Gastrocnemius medialis (tissue), 4 donors: ENCODE measurements at regions of chr12 and their contacts with region 1.

Region 1: GRCh38 chr12:67355578-67356379 is 86.6 kb downstream of the CAND1 start:
- DNase-seq: peak in 1 of 2 donors; percentile 14
- ATAC-seq: peak; percentile 74 to 79
- H3K4me3 ChIP-seq: peak overlapping the region in 2 of 4 donors; percentile 1 to 4
- H3K27ac ChIP-seq: peak overlapping the region; percentile 69 to 81 (median 76)
- H3K4me1 ChIP-seq: peaks cover 38 to 42% of the 10 kb centered on the region in 2 donors
- H3K27me3 ChIP-seq: no peaks in the 10 kb centered on the region
- CTCF ChIP-seq: peak in 4 of 5 experiments; percentile 42 to 59 (median 56)
- POLR2A ChIP-seq: no peak

Region 2: DNA sequence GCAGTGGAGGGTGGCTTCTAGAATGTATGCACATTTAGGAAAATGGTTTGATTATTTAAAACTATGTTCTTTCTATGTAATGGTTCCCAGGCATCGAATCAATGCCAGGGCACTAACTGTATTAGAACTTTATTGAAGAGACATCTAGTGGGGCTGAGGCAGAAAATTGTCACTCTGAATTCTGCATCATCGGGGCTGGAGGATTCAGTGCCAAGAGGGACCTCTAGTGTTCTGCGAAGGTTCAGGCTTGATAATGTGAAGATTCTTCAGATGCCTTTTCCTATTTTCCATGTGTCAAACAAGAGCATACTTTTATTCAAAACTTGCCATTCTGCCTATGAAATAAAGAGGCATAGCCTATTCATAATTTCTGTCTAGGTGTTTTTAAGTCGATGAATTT is 59.7 kb after region 1 on chr12:
- in situ Hi-C with region 1: no loop called
- intact Hi-C with region 1: loop called (anchors 1 kb)
- DNase-seq: no peak
- ATAC-seq: peak in 1 of 2 donors; percentile 37
- H3K4me3 ChIP-seq: no peak overlapping the region
- H3K27ac ChIP-seq: no peak overlapping the region
- H3K4me1 ChIP-seq: peaks cover 21 to 27% of the 10 kb centered on the region in 2 donors
- H3K27me3 ChIP-seq: no peaks in the 10 kb centered on the region
- CTCF ChIP-seq: peak in 2 of 5 experiments; percentile 29 to 40
- POLR2A ChIP-seq: no peak

Region 3: GRCh38 chr12:67441736-67442346 is 86.1 kb after region 1 on chr12:
- in situ Hi-C with region 1: loop called in 3 of 4 experiments (anchors 5 kb)
- intact Hi-C with region 1: loop called (anchors 1 kb)
- DNase-seq: peak; percentile 78 to 88
- ATAC-seq: peak; percentile 95 to 99
- H3K4me3 ChIP-seq: peak overlapping the region; percentile 45 to 55 (median 50)
- H3K27ac ChIP-seq: peak overlapping the region; percentile 70 to 86 (median 76)
- H3K4me1 ChIP-seq: peaks cover 13 to 18% of the 10 kb centered on the region in 2 donors
- H3K27me3 ChIP-seq: no peaks in the 10 kb centered on the region
- CTCF ChIP-seq: peak; percentile 69 to 86 (median 75)
- POLR2A ChIP-seq: no peak

Region 4: GRCh38 chr12:67661311-67662021 is 305.7 kb after region 1 on chr12:
- in situ Hi-C with region 1: loop called in 1 of 4 experiments (anchors 10 kb)
- intact Hi-C with region 1: loop called (anchors 2 kb)
- DNase-seq: peak in 1 of 2 donors; percentile 30
- ATAC-seq: peak; percentile 77 to 83
- H3K4me3 ChIP-seq: no peak overlapping the region
- H3K27ac ChIP-seq: peak overlapping the region; percentile 80 to 98 (median 81)
- H3K4me1 ChIP-seq: peaks cover 84 to 97% of the 10 kb centered on the region in 2 donors
- H3K27me3 ChIP-seq: no peaks in the 10 kb centered on the region
- CTCF ChIP-seq: no peak
- POLR2A ChIP-seq: no peak

Region 5: DNA sequence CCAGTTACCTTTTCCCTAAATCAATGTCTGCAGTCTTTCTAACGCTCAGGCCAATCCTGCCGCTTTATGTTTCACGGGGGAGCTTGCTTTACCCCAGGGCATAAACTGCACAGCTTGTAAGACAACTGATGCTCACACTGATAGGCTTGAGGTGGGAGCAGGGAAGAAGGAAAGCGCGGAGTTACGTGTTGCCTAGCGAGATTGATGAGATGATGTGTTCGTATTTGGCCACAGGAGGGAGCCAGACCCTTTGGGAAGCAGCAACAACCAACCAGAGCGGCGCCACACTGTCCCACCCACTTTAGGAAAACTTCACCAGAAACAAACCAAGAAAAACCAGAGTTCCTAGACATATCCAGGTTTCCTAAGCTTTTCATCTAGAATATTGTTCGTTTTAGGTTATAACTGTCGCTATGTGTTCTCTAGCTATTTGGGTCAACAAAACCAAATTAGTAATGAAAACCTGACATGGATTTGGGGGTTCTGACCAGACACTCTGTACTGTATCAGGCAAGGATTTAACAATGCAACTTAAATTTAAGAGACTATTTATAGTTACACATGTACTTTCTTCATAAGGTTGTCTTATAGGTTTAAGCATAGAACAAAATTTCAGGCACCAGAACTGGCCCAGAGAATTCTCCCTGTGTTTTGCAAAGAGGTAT is 867.4 kb after region 1 on chr12:
- in situ Hi-C with region 1: no loop called
- intact Hi-C with region 1: loop called (anchors 10 kb)
- DNase-seq: peak; percentile 65 to 67
- ATAC-seq: peak; percentile 96 to 99
- H3K4me3 ChIP-seq: peak overlapping the region in 3 of 4 donors; percentile 4 to 17 (median 6)
- H3K27ac ChIP-seq: no peak overlapping the region
- H3K4me1 ChIP-seq: peaks cover 4 to 8% of the 10 kb centered on the region in 2 donors
- H3K27me3 ChIP-seq: no peaks in the 10 kb centered on the region
- CTCF ChIP-seq: peak; percentile 60 to 86 (median 81)
- POLR2A ChIP-seq: no peak